Panc1 (cell line): ENCODE measurements at regions of chr16 and their contacts with region 1.

Region 1: DNA sequence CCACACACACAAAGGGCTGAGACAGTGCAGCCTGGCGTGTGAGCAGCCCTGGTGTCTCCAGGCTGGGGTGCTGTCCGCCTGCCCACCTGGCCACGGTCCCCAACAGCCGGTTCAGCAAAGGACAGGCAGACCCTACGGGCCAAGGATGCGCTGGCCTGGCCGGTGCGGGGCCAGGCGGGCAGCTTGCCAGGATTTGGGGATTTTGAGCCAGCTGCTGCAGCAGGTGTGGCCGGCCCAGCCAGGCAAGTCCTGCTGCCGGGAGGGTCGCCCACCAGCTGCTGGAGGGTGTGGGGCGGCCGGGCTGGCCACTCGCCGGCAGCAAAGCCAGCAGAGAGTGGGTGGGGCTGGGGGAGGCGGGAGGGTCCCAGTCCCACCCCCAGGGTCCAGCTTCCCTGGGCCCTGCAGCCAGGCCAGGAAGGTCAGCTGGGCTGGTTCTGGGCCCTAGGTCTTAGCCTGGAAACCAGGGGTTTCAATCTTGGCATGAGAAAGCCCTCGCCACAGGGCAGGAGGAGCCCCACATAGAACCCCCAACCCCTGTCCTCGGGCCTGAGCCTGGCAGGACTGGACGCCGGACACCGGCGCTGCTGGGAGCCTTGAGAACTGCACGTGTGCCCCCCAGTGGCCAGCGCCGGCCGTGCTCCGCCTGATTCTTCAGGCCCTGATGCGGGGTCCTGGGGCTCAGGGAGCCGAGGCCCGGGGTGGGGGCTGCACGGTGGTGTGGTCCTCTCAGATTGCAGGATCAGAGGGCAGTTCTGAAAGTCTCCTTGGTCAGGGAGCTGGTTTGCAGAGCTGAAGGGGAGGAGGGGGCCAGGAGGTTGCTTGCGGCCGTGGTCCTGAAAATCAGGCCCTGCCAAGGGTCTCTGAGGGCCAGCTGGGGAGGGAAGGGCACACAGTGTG is 17.6 kb upstream of the SSTR5 start:
- DNase-seq: no peak
- ATAC-seq: peak; percentile 82
- H3K4me3 ChIP-seq: no peak overlapping the region
- H3K27ac ChIP-seq: no peak overlapping the region
- H3K4me1 ChIP-seq: peaks cover under 1% of the 10 kb centered on the region; the same call in 1 of the 2 replicates
- H3K27me3 ChIP-seq: no peaks in the 10 kb centered on the region
- CTCF ChIP-seq: peak; percentile 96

Region 2: DNA sequence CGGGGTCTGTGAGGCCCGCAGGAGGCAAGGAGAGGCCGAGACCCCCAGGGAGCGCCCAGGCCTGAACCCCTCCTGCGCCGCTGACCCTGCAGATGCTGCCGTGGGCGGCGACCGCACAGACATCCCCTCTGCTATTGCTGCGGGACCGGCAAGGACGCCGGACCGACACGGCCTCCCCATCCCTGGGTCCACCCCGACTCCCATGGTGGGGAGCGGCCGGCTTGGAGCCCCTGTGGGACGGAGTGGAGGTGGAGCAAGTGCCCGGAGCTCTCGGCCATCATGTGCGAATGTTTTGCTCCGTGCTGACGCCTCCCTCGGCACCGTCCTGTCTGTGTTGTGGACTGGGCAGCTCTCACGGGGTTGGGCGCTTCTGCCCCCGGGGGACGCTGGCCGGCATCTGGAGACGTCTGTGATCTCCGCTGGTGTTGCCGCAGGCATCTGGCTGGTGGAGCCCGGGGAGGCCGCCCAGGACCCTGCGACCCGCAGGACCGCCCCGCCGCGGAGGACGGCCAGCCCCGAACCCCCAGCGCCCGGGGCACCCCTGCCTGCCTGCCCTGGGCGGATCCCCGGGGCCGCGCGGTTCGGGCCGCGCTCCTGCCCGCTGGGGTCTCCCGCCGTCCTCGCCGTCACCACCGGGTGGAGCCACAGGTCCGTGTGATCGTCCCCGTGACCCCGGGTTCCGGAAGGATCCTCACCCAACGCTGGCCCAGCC is 241.5 kb before region 1 on chr16:
- CTCF ChIA-PET with region 1: interaction called, 6 read pairs
- POLR2A ChIA-PET with region 1: no interaction called
- in situ Hi-C with region 1: no loop called
- intact Hi-C with region 1: loop called (anchors 1 kb)
- DNase-seq: no peak
- ATAC-seq: peak; percentile 89
- H3K4me3 ChIP-seq: peak overlapping the region; percentile 34 to 41
- H3K27ac ChIP-seq: no peak overlapping the region
- H3K4me1 ChIP-seq: peaks cover 7% of the 10 kb centered on the region; the same call in 1 of the 2 replicates
- H3K27me3 ChIP-seq: no peaks in the 10 kb centered on the region
- CTCF ChIP-seq: peak; percentile 90

Region 3: DNA sequence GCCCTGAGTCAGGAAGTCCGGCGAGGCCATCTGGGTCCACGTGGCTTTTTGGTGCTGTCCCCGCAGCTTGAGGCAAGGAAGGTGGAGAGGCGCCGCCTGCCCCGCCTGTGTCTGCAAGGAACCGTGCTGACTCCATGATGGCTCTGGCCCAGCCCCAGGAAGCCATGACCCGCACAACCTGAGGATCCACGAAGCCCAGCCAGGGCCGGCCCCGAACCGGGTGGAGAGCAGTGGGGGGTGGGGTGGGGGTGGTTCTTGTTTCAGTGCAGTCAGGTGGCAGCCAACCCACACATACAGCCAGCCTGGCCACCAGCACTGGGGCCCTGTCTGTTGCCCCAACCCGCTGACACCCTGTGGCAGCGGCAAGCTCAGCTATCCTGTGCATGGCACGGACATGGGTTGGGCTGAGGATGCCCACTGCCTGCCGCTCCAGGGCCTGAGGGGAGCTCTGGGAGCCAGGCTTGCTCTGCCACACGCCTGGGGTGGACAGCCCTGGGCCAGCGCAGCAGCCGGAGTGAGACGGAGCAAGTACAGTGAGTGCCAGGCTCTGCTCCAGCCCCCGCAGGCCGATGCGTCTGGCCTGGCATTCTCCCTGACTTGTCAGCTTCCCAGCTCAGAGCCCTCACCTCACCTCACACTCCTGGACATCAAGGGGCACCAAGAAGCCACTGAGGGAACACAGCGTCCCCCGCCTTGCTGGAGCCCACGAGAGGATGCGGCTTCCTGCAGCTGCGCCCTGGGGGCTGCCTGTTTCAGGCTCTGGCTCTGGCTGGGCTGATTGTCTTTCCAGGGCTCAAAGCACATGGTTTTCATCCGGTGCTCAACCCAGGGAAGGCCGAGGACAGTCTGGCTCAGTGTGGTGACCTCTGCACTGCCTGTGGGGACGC is 152.9 kb before region 1 on chr16:
- CTCF ChIA-PET with region 1: no interaction called
- POLR2A ChIA-PET with region 1: no interaction called
- in situ Hi-C with region 1: no loop called
- intact Hi-C with region 1: no loop called
- DNase-seq: no peak
- ATAC-seq: peak; percentile 43
- H3K4me3 ChIP-seq: no peak overlapping the region
- H3K27ac ChIP-seq: no peak overlapping the region
- H3K4me1 ChIP-seq: no peaks in the 10 kb centered on the region
- H3K27me3 ChIP-seq: no peaks in the 10 kb centered on the region
- CTCF ChIP-seq: no peak

Region 4: DNA sequence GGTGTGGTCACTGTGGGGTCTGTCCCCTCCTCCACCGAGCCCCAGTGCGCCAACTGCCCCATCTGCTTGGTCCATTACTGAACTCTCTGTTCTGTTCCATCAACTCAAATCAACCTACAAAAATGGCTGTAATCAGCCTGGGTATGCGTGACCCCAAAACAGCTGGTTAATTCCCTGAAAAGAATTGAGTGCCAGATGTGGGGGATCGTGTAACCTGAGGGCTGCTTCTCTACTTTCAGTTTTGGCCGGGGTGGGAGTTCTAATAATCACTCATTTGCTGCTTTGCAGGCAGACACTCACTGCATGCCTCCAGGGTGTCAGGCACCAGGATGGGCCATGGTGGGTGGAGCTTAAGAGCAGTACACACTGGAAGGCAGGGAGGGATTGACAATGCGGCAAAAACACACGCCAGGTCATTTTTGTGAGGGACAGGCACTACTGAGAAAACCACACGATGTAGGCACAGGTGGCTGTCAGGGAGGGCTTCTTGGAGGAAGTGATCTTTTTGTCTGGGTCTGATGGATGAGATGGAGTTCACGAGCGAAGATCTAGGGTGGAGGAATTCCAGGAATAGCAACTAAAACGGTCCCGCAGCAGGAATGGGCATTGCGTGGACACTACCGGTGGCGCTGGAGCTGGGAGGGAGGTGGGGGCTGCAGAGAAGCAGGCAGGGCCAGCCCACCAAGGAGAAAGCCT is 12.7 kb before region 1 on chr16:
- CTCF ChIA-PET with region 1: interaction called, 12 read pairs
- POLR2A ChIA-PET with region 1: no interaction called
- in situ Hi-C with region 1: no loop called
- intact Hi-C with region 1: no loop called
- DNase-seq: no peak
- ATAC-seq: no peak
- H3K4me3 ChIP-seq: no peak overlapping the region
- H3K27ac ChIP-seq: no peak overlapping the region
- H3K4me1 ChIP-seq: no peaks in the 10 kb centered on the region; the same call in 1 of the 2 replicates
- H3K27me3 ChIP-seq: no peaks in the 10 kb centered on the region
- CTCF ChIP-seq: no peak

Region 5: GRCh38 chr16:1105888-1106620 is 51.1 kb after region 1 on chr16:
- CTCF ChIA-PET with region 1: interaction called, 3 read pairs
- POLR2A ChIA-PET with region 1: no interaction called
- in situ Hi-C with region 1: no loop called
- intact Hi-C with region 1: loop called (anchors 1 kb)
- DNase-seq: no peak
- ATAC-seq: peak; percentile 80
- H3K4me3 ChIP-seq: peak overlapping the region; percentile 11 to 33; a peak in 1 of 4 replicates
- H3K27ac ChIP-seq: peak overlapping the region; percentile 29; the same call in 1 of the 2 replicates
- H3K4me1 ChIP-seq: peaks cover 33% of the 10 kb centered on the region
- H3K27me3 ChIP-seq: no peaks in the 10 kb centered on the region
- CTCF ChIP-seq: peak; percentile 88

Region 6: GRCh38 chr16:1300664-1301476 is 246.0 kb after region 1 on chr16:
- CTCF ChIA-PET with region 1: interaction called, 13 read pairs
- POLR2A ChIA-PET with region 1: no interaction called
- in situ Hi-C with region 1: no loop called
- intact Hi-C with region 1: no loop called
- DNase-seq: no peak
- ATAC-seq: peak; percentile 87
- H3K4me3 ChIP-seq: peak overlapping the region; percentile 12 to 26; a peak in 1 of 4 replicates
- H3K27ac ChIP-seq: no peak overlapping the region
- H3K4me1 ChIP-seq: peaks cover 19% of the 10 kb centered on the region
- H3K27me3 ChIP-seq: no peaks in the 10 kb centered on the region
- CTCF ChIP-seq: peak; percentile 98